Activated CD4-positive, alpha-beta T cell treated with anti-CD3 and anti-CD28 coated beads, Interleukin-2, amount 10 ng/mL, durations not matched to agents 24 days and 14 days (primary cell): ENCODE measurements at regions of chr20 and their contacts with region 1.

Region 1: DNA sequence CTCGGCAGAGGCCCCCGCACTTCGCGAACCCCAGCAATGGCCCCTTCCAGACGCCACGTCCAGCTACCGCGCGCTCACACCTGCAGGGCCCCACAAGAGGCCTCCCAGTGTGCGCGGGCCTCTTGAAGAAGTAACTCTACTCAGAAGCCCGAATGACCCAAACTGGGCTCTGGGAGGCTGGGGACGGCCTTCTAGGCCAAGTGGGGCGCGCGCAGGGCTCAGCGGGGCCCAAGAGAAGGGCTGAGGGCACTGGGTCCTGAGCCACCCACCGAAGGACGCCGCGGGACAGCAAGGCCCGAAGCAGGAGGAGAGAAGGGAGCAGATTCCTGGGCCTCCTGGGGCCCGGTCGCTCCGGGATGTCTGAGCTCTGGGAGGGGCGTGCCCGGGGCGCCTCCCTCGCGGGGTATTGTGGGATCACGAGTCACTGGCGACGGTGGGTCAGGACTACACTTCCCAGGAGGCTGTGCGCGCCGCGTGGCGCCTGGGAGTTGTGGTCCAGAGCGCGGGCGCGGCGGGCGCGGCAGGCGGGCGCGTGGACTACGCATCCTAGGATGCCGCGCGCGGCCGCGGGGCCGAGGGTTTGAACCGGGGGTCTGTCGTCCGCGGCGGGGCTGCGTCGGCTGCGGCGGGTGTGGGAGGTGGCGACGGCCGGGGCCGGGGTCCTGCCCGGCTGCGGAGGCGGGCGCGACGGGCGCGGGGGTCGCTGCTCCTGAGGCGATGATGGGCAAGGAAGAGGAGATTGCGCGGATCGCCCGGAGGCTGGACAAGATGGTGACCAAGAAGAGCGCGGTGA is at the start of gene TCEA2:
- DNase-seq: peak; percentile 99
- H3K4me3 Mint-ChIP-seq: peak within 1 kb of the TSS; percentile 95
- H3K27ac Mint-ChIP-seq: peak within 1 kb of the TSS; percentile 91
- H3K4me1 Mint-ChIP-seq: peaks cover 54% of the 10 kb centered on the region
- H3K27me3 Mint-ChIP-seq: no peaks in the 10 kb centered on the region
- total RNA-seq, gene TCEA2: 35.4 and 36.8 TPM in 2 replicates

Region 2: GRCh38 chr20:63394069-63394919 is 668.5 kb before region 1 on chr20:
- intact Hi-C with region 1: no loop called
- DNase-seq: no peak
- H3K4me3 Mint-ChIP-seq: no peak overlapping the region
- H3K27ac Mint-ChIP-seq: no peak overlapping the region
- H3K4me1 Mint-ChIP-seq: no peaks in the 10 kb centered on the region
- H3K27me3 Mint-ChIP-seq: no peaks in the 10 kb centered on the region

Region 3: GRCh38 chr20:63627129-63627750 is 435.6 kb before region 1 on chr20:
- intact Hi-C with region 1: loop called (anchors 10 kb)
- DNase-seq: peak; percentile 98
- H3K4me3 Mint-ChIP-seq: peak overlapping the region; percentile 97
- H3K27ac Mint-ChIP-seq: peak overlapping the region; percentile 99
- H3K4me1 Mint-ChIP-seq: peaks cover 20% of the 10 kb centered on the region
- H3K27me3 Mint-ChIP-seq: no peaks in the 10 kb centered on the region

Region 4: DNA sequence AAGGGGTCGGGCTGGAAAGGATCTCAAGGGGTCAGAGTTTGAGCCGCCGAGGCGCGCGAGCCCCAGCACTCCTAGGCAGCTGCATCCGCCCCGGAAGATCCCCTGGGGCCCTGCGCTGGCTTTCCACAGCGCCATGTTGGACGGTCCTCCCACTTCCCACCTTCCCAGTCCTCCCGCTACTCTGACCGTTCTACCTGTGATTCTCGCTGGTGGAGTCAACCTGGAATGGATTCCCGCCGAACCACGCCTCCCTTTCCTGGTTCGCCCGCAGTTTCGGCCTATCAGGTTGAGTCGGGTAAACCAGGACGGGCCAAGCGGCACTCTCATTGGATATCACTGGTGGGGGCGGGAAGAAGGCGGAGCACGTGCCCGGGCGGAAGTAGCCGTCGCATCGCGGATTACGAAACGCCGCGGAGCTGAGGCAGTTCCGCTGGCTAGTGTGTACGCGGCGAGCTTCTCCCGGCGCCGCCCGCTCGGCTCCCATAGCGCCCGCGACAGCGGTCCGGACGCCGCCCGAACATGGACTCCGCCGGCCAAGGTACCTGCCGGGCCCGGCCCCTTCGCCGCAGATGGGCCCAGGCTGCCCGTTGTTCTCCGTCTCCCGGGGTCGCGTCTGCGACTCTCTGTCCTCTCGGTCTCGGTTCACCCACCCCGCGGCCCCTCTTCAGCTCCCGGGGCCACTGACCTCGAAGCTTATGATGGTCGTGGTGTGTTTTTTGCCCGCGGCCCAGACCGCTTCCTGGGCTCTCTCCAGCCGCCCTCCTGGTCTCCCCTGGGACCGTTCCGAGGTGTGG is 197.7 kb before region 1 on chr20 and contains the start of gene TPD52L2:
- intact Hi-C with region 1: loop called (anchors 10 kb)
- DNase-seq: peak; percentile 99
- H3K4me3 Mint-ChIP-seq: peak within 1 kb of the TSS; percentile 87
- H3K27ac Mint-ChIP-seq: peak within 1 kb of the TSS; percentile 100
- H3K4me1 Mint-ChIP-seq: peaks cover 25% of the 10 kb centered on the region
- H3K27me3 Mint-ChIP-seq: no peaks in the 10 kb centered on the region
- total RNA-seq, gene TPD52L2: 75.9 and 78.8 TPM in 2 replicates

Region 5: DNA sequence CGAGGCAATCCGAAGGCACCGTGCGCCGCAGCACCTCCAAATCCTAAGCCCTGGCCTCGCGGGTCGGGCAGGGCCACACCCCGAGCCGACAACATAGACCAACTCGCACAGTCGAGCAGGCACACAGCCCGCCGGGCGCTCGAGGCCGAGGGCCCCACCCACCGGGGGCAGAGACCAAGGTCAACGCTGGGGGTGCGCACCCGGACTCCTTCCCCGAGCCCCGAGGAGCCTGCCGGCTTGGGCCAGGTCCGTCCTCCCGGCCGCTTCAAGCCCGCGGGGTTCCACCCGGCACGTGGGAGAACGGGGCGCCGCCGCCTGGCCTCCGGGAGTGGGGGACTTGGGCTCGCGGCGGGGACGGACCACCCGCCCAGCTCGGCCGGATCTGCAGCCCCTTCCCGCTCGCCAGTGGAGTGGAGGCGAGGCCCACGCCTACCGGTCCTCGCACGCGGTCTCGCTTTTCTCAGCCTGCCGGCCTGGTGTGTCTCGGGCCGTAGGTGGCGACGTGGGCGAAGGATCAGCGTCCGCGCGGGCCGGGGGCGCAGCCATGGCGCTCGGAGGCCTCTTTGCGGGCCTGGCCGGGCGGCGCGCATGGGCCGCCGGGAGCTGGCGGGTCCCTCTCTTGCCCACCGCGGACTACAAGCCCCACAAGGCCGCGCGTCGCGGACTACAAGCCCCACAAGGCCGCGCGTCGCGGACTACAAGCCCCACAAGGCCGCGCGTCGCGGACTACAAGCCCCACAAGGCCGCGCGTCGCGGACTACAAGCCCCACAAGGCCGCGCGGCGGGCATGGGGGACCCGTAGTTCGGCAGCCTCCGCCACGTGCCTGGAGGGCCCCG is 106.7 kb before region 1 on chr20 and contains the start of gene UCKL1:
- intact Hi-C with region 1: loop called (anchors 1 kb)
- DNase-seq: peak; percentile 97
- H3K4me3 Mint-ChIP-seq: peak within 1 kb of the TSS; percentile 85
- H3K27ac Mint-ChIP-seq: peak within 1 kb of the TSS; percentile 88
- H3K4me1 Mint-ChIP-seq: peaks cover 28% of the 10 kb centered on the region
- H3K27me3 Mint-ChIP-seq: no peaks in the 10 kb centered on the region
- total RNA-seq, gene UCKL1: 48.1 and 49.5 TPM in 2 replicates

Region 6: GRCh38 chr20:64001607-64002011 is 61.2 kb before region 1 on chr20:
- intact Hi-C with region 1: no loop called
- DNase-seq: no peak
- H3K4me3 Mint-ChIP-seq: no peak overlapping the region
- H3K27ac Mint-ChIP-seq: no peak overlapping the region
- H3K4me1 Mint-ChIP-seq: peaks cover 2% of the 10 kb centered on the region
- H3K27me3 Mint-ChIP-seq: no peaks in the 10 kb centered on the region

Region 7: GRCh38 chr20:64038565-64039292 is 24.1 kb before region 1 on chr20:
- intact Hi-C with region 1: loop called (anchors 2 kb)
- DNase-seq: peak; percentile 95
- H3K4me3 Mint-ChIP-seq: peak overlapping the region; percentile 79
- H3K27ac Mint-ChIP-seq: peak overlapping the region; percentile 80
- H3K4me1 Mint-ChIP-seq: peaks cover 48% of the 10 kb centered on the region
- H3K27me3 Mint-ChIP-seq: no peaks in the 10 kb centered on the region

Region 8: GRCh38 chr20:64079273-64080012 is 16.7 kb after region 1 on chr20 and contains the start of gene RGS19:
- intact Hi-C with region 1: loop called (anchors 1 kb)
- DNase-seq: peak; percentile 93
- H3K4me3 Mint-ChIP-seq: peak within 1 kb of the TSS; percentile 95
- H3K27ac Mint-ChIP-seq: peak within 1 kb of the TSS; percentile 80
- H3K4me1 Mint-ChIP-seq: peaks cover 29% of the 10 kb centered on the region
- H3K27me3 Mint-ChIP-seq: peaks cover 13% of the 10 kb centered on the region
- total RNA-seq, gene RGS19: 50.0 TPM in 2 replicates